ENCODE measurements at regions of chr4 and their contacts with region 1.

Region 1: GRCh38 chr4:114386637-114387233 is 211.9 kb upstream of the UGT8 start:
- DNase-seq: peak in 1 of 2 experiments; percentile 3
- H3K4me3 ChIP-seq: no peak overlapping the region
- H3K27ac ChIP-seq: no peak overlapping the region
- H3K4me1 ChIP-seq: no peaks in the 10 kb centered on the region
- H3K27me3 ChIP-seq: no peaks in the 10 kb centered on the region
- CTCF ChIP-seq: peak; percentile 72

Region 2: DNA sequence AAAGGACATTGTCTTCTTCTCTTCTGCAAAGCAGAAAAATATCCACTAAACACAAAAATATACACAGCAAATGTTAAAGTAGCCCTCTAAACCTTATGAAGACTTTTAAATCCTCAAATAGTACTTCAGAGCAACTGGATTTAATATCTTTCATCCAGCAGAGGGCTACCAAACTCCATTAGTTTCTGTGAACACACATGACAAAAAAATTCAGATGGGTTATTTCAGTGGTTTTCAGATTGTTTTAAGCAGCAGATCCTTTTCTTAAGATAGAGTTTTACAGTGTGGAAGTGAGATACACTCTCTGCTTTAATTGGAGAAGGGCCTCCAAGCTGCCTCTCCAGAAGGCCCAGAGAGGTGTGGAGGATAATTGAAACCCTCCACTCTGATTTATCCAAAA is 1280.6 kb before region 1 on chr4:
- CTCF ChIA-PET with region 1: no interaction called
- POLR2A ChIA-PET with region 1: no interaction called
- intact Hi-C with region 1: loop called (anchors 1 kb)
- DNase-seq: no peak
- H3K4me3 ChIP-seq: no peak overlapping the region
- H3K27ac ChIP-seq: no peak overlapping the region
- H3K4me1 ChIP-seq: no peaks in the 10 kb centered on the region
- H3K27me3 ChIP-seq: no peaks in the 10 kb centered on the region
- CTCF ChIP-seq: peak; percentile 43; the same call in 1 of the 2 replicates

Region 3: DNA sequence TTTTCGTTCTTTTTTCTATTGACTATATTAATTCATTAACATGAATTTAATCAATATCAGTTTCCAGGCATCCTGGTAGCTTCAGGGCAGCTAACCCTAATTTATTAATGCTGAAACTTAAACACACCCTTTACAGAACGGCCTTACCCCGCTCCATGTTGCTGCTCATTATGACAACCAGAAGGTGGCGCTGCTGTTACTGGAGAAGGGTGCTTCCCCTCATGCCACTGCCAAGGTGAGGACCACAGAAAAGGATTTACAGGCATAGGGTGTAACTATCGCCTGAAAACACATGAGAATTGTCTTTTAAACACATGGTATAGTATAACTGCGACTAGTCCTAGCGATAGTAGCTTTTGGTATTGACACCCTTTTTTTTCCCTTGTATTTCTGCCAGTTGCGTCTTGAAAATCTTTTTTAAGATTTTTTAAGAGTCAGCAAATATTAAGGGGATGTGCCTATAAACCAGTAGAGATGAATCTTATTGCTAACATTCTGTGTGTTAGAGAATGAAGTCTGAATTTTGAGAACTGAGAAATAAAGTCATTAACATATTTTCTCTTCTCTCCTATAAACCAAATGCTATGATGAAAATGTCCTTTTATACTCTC is 1108.3 kb before region 1 on chr4:
- CTCF ChIA-PET with region 1: no interaction called
- POLR2A ChIA-PET with region 1: no interaction called
- intact Hi-C with region 1: loop called (anchors 5 kb)
- DNase-seq: peak in 1 of 2 experiments; percentile 38
- H3K4me3 ChIP-seq: no peak overlapping the region
- H3K27ac ChIP-seq: no peak overlapping the region
- H3K4me1 ChIP-seq: no peaks in the 10 kb centered on the region
- H3K27me3 ChIP-seq: no peaks in the 10 kb centered on the region
- CTCF ChIP-seq: peak; percentile 65

Region 4: GRCh38 chr4:113636438-113636818 is 750.3 kb before region 1 on chr4:
- CTCF ChIA-PET with region 1: interaction called, 10 read pairs
- POLR2A ChIA-PET with region 1: no interaction called
- intact Hi-C with region 1: no loop called
- DNase-seq: no peak
- H3K4me3 ChIP-seq: no peak overlapping the region
- H3K27ac ChIP-seq: no peak overlapping the region
- H3K4me1 ChIP-seq: peaks cover 10% of the 10 kb centered on the region
- H3K27me3 ChIP-seq: no peaks in the 10 kb centered on the region; the same call in 1 of the 2 replicates
- CTCF ChIP-seq: no peak

Region 5: GRCh38 chr4:114312338-114312737 is 74.4 kb before region 1 on chr4:
- CTCF ChIA-PET with region 1: no interaction called
- POLR2A ChIA-PET with region 1: no interaction called
- intact Hi-C with region 1: no loop called
- DNase-seq: no peak
- H3K4me3 ChIP-seq: no peak overlapping the region
- H3K27ac ChIP-seq: no peak overlapping the region
- H3K4me1 ChIP-seq: no peaks in the 10 kb centered on the region
- H3K27me3 ChIP-seq: no peaks in the 10 kb centered on the region
- CTCF ChIP-seq: no peak

Region 6: DNA sequence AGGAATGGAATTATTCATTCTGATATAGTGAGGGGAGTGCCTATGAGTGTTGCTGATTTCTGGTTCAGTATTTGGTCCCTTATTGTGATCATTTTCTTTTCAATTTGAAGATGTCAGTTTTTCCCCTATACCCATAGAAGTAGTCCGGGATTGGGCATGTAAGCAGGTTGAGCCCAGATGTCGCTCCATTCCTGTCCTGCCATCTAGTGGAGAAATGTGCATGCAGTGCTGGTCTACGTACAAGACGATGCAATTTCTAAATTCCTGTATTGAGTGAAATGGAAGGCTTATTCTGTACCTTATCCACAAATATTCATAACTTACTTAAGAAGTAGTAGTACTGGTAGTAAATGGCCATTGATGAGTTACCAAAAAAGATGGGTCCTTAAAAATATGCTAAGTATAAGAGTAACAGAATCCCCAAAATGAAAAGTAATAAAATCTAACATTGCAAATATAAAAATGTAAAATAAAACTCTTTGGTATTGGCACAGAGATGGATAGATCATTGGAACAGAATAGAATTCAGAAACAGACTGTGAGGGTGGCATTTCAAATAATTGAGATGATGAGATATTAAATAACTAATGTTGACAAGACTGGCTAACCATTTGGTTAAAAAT is 272.8 kb after region 1 on chr4:
- CTCF ChIA-PET with region 1: interaction called, 5 read pairs
- POLR2A ChIA-PET with region 1: no interaction called
- intact Hi-C with region 1: loop called (anchors 1 kb)
- DNase-seq: peak; percentile 33 to 48
- H3K4me3 ChIP-seq: no peak overlapping the region
- H3K27ac ChIP-seq: no peak overlapping the region
- H3K4me1 ChIP-seq: no peaks in the 10 kb centered on the region
- H3K27me3 ChIP-seq: no peaks in the 10 kb centered on the region
- CTCF ChIP-seq: peak; percentile 70

Region 7: GRCh38 chr4:114694770-114695169 is 308.0 kb after region 1 on chr4:
- CTCF ChIA-PET with region 1: no interaction called
- POLR2A ChIA-PET with region 1: no interaction called
- intact Hi-C with region 1: loop called (anchors 2 kb)
- DNase-seq: no peak
- H3K4me3 ChIP-seq: no peak overlapping the region
- H3K27ac ChIP-seq: no peak overlapping the region
- H3K4me1 ChIP-seq: no peaks in the 10 kb centered on the region
- H3K27me3 ChIP-seq: no peaks in the 10 kb centered on the region
- CTCF ChIP-seq: peak; percentile 68